ENCODE measurements at regions of chr9 and their contacts with region 1.

Region 1: GRCh38 chr9:70111042-70111602 is 67.5 kb downstream of the MAMDC2 start:
- DNase-seq: peak; percentile 67
- H3K4me3 Mint-ChIP-seq: no peak overlapping the region
- H3K27ac Mint-ChIP-seq: no peak overlapping the region
- H3K4me1 Mint-ChIP-seq: peaks cover 11% of the 10 kb centered on the region
- H3K27me3 Mint-ChIP-seq: peaks cover 5% of the 10 kb centered on the region

Region 2: DNA sequence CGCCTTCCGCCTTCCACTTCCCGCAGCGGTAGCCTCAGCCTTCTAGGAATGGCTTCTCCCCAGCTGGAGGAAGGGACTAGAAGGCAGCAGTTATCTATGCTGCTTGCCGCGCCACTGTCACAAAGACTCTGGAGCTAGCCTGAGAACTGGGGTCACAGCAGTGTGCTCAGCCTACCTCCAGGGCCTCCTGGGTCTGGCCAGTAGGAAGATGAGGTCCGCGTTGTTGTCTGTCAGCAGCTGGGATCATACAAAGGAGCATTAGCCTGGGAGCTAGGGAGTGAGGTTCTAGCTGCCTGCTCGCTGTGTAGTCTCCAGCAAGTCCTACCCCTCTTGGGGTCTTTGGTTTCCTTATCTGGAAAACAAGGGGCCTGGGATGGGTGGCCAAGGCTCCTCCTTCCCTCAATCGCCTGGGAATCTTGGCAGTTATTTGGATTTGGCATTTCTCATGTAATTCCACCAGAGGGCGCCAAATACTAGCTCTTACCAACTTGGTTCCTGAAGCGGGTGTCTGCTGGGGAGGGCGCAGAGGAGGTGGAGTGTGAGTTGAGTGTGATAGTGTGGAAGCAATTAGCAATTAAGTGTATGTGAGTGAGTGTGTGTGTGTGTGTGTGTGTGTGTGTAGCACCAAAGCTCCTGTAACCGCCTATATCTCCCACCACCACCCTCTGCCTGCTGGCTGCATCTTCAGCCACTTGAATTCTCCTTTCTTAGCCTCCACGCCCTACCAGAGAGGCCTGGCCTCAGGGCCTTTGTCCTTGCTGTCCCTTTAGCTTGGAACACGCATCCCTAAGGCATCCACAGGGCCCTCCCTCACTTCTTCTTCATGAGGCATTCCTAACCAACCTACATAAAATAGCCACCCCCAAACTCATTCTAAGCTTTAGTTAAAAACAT is 689.0 kb before region 1 on chr9:
- CTCF ChIA-PET with region 1: interaction called, 34 read pairs
- POLR2A ChIA-PET with region 1: no interaction called
- intact Hi-C with region 1: no loop called
- DNase-seq: peak; percentile 46
- H3K4me3 Mint-ChIP-seq: no peak overlapping the region
- H3K27ac Mint-ChIP-seq: no peak overlapping the region
- H3K4me1 Mint-ChIP-seq: no peaks in the 10 kb centered on the region
- H3K27me3 Mint-ChIP-seq: peaks cover 18% of the 10 kb centered on the region

Region 3: DNA sequence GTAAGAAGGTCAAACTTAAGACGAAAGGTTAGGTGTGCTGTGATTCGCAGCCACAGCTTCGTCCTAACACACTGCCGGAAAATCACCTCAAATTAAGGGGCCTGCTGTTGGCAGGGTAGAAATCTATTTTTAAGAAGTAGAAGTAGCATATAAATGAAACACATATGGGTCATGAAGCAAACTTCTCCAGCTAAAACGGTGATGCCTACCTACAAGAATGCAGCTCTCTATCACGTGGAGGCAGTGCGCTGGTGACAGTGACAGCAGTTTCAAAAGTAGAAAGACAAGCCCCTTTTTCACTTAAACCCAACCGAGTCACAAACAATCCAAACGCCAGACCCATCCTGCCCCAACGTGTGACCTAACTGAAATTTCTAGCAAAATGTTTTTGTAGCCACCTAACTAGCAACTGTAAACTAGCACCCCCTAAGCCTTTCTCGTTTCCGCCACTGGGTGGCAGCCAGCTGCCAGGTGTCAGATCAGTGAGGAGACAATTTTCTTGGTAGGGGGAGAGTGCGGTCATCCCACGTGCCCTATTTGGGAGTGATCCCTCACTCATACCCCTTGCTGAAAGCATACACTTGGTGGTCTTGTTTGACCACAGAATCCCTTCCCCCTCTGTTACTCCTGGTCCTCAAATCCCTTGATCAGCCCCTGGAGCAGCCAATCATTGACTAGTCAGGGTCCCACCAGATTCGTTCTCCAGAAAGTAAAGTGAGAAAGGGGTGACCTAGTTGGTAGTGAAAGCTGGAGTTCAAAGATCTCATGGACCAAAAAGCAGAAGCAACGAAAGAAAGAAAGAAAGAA is 139.3 kb before region 1 on chr9:
- CTCF ChIA-PET with region 1: interaction called, 107 read pairs
- POLR2A ChIA-PET with region 1: interaction called, 5 read pairs
- intact Hi-C with region 1: loop called (anchors 1 kb)
- DNase-seq: peak; percentile 69
- H3K4me3 Mint-ChIP-seq: no peak overlapping the region
- H3K27ac Mint-ChIP-seq: no peak overlapping the region
- H3K4me1 Mint-ChIP-seq: no peaks in the 10 kb centered on the region
- H3K27me3 Mint-ChIP-seq: peaks cover 15% of the 10 kb centered on the region

Region 4: DNA sequence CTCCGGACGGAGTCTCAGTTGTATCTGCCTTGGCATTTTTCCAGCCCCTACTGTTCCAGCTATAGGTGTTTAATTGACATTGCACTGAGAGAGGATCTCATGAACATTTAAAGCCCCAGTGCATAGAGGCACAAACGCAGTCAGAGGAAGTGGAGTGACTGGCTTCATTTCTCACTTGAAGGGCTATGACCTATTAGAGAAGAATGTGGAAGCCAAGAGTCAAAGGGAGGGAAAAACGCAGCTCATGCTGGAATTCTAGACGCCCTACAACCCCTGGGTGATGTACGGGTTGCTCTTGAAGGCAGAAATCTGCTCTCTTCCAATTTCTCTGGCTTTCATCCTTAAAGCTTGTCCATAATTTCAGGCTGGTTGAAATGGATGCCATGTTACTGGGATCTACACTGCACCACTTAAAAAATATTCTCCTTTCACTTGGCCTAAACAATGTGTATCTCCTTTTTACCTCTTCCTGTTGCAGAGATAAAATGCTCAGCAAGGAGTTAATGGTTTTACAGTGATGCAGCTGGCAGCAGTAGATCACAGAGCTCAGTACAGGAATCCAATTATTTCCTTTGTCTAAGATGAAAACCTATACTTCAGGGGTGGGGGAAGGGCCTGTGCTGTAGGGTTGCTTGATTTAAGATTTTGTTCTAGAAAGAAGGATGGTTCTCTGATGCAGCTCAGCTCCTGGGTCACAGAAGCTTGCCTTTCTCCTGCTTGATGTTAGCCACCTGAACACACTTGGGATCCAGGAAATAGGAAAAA is 129.3 kb before region 1 on chr9:
- CTCF ChIA-PET with region 1: interaction called, 17 read pairs
- POLR2A ChIA-PET with region 1: no interaction called
- intact Hi-C with region 1: no loop called
- DNase-seq: no peak
- H3K4me3 Mint-ChIP-seq: no peak overlapping the region
- H3K27ac Mint-ChIP-seq: no peak overlapping the region
- H3K4me1 Mint-ChIP-seq: no peaks in the 10 kb centered on the region
- H3K27me3 Mint-ChIP-seq: no peaks in the 10 kb centered on the region

Region 5: GRCh38 chr9:70085241-70085640 is 25.9 kb before region 1 on chr9:
- CTCF ChIA-PET with region 1: interaction called, 23 read pairs
- POLR2A ChIA-PET with region 1: no interaction called
- intact Hi-C with region 1: no loop called
- DNase-seq: no peak
- H3K4me3 Mint-ChIP-seq: no peak overlapping the region
- H3K27ac Mint-ChIP-seq: no peak overlapping the region
- H3K4me1 Mint-ChIP-seq: no peaks in the 10 kb centered on the region
- H3K27me3 Mint-ChIP-seq: peaks cover 7% of the 10 kb centered on the region

Region 6: DNA sequence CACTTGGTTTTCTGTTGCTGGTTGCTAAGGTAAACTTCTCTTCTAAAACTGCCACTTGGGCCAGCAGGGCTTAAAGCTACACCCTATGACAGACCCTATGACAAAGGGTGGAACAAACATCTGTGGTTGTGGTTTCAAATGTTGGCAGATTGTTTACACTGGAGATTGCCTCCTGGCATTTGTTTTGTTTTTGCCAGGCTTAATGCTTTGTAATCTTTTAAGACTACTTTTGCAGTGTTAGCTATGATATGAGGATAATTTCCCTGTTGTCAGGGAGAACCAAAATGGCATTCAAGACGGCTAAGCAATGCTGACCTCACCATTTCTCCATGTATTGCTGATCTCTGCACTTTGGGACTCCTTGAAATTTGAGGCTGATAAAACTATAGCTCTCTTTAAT is 17.2 kb before region 1 on chr9:
- CTCF ChIA-PET with region 1: interaction called, 16 read pairs
- POLR2A ChIA-PET with region 1: no interaction called
- intact Hi-C with region 1: no loop called
- DNase-seq: no peak
- H3K4me3 Mint-ChIP-seq: no peak overlapping the region
- H3K27ac Mint-ChIP-seq: no peak overlapping the region
- H3K4me1 Mint-ChIP-seq: no peaks in the 10 kb centered on the region
- H3K27me3 Mint-ChIP-seq: no peaks in the 10 kb centered on the region

Region 7: GRCh38 chr9:70100362-70100761 is 10.8 kb before region 1 on chr9:
- CTCF ChIA-PET with region 1: interaction called, 11 read pairs
- POLR2A ChIA-PET with region 1: no interaction called
- intact Hi-C with region 1: no loop called
- DNase-seq: no peak
- H3K4me3 Mint-ChIP-seq: no peak overlapping the region
- H3K27ac Mint-ChIP-seq: no peak overlapping the region
- H3K4me1 Mint-ChIP-seq: no peaks in the 10 kb centered on the region
- H3K27me3 Mint-ChIP-seq: peaks cover 1% of the 10 kb centered on the region